IMR-90 (cell line): ENCODE measurements at regions of chr11 and their contacts with region 1.

Region 1: GRCh38 chr11:94183886-94184264 is 55.2 kb downstream of the PANX1 start:
- DNase-seq: peak; percentile 67
- ATAC-seq: peak; percentile 22; the same call in 1 of the 2 replicates
- H3K4me3 ChIP-seq: no peak overlapping the region
- H3K27ac ChIP-seq: no peak overlapping the region
- H3K4me1 ChIP-seq: peaks cover 26% of the 10 kb centered on the region
- H3K27me3 ChIP-seq: no peaks in the 10 kb centered on the region
- CTCF ChIP-seq: peak; percentile 67
- POLR2A ChIP-seq: no peak
- RAD21 ChIP-seq: peak; percentile 71

Region 2: GRCh38 chr11:93348930-93349329 is 834.9 kb before region 1 on chr11:
- CTCF ChIA-PET with region 1: no interaction called
- POLR2A ChIA-PET with region 1: no interaction called
- dilution Hi-C with region 1: no loop called
- in situ Hi-C with region 1: no loop called
- intact Hi-C with region 1: no loop called
- DNase-seq: no peak
- ATAC-seq: no peak
- H3K4me3 ChIP-seq: no peak overlapping the region
- H3K27ac ChIP-seq: no peak overlapping the region
- H3K4me1 ChIP-seq: no peaks in the 10 kb centered on the region
- H3K27me3 ChIP-seq: no peaks in the 10 kb centered on the region
- CTCF ChIP-seq: no peak
- POLR2A ChIP-seq: no peak
- RAD21 ChIP-seq: no peak

Region 3: DNA sequence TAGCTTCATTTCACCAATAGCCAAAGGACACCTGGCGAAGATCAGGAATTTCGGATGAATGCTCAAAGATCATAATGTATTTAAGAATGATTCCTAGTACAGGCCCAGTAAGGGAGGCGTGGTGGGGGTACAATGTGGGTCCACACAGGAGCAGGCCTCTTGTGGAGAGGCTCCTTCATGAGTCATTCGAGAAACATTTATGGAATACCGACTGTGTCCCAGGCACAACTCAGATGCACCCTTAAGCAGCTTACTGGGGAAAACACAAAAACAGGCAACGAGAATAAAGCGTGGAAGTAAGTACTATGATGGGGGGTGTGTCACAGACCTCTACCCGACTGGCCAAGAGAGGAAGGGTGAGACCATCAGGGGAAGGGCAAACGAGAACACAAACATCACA is 685.2 kb before region 1 on chr11:
- CTCF ChIA-PET with region 1: no interaction called
- POLR2A ChIA-PET with region 1: no interaction called
- dilution Hi-C with region 1: no loop called
- in situ Hi-C with region 1: no loop called
- intact Hi-C with region 1: no loop called
- DNase-seq: peak; percentile 51
- ATAC-seq: peak; percentile 67
- H3K4me3 ChIP-seq: no peak overlapping the region
- H3K27ac ChIP-seq: no peak overlapping the region
- H3K4me1 ChIP-seq: peaks cover 4% of the 10 kb centered on the region; the same call in 1 of the 2 replicates
- H3K27me3 ChIP-seq: no peaks in the 10 kb centered on the region
- CTCF ChIP-seq: no peak
- POLR2A ChIP-seq: no peak
- RAD21 ChIP-seq: no peak

Region 4: GRCh38 chr11:93908689-93909088 is 275.2 kb before region 1 on chr11:
- CTCF ChIA-PET with region 1: no interaction called
- POLR2A ChIA-PET with region 1: no interaction called
- dilution Hi-C with region 1: no loop called
- in situ Hi-C with region 1: no loop called
- intact Hi-C with region 1: loop called (anchors 5 kb)
- DNase-seq: peak; percentile 91
- ATAC-seq: peak; percentile 97
- H3K4me3 ChIP-seq: no peak overlapping the region
- H3K27ac ChIP-seq: peak overlapping the region; percentile 80
- H3K4me1 ChIP-seq: peaks cover 9% of the 10 kb centered on the region
- H3K27me3 ChIP-seq: no peaks in the 10 kb centered on the region
- CTCF ChIP-seq: no peak
- POLR2A ChIP-seq: no peak
- RAD21 ChIP-seq: no peak

Region 5: GRCh38 chr11:94199136-94200130 is 15.6 kb after region 1 on chr11:
- CTCF ChIA-PET with region 1: no interaction called
- POLR2A ChIA-PET with region 1: no interaction called
- dilution Hi-C with region 1: no loop called
- in situ Hi-C with region 1: no loop called
- intact Hi-C with region 1: loop called (anchors 1 kb)
- DNase-seq: peak; percentile 29
- ATAC-seq: no peak
- H3K4me3 ChIP-seq: no peak overlapping the region
- H3K27ac ChIP-seq: peak overlapping the region; percentile 72
- H3K4me1 ChIP-seq: peaks cover 17% of the 10 kb centered on the region
- H3K27me3 ChIP-seq: no peaks in the 10 kb centered on the region
- CTCF ChIP-seq: no peak
- POLR2A ChIP-seq: no peak
- RAD21 ChIP-seq: no peak

Region 6: GRCh38 chr11:94417386-94417987 is 233.6 kb after region 1 on chr11:
- CTCF ChIA-PET with region 1: interaction called, 13 read pairs
- POLR2A ChIA-PET with region 1: no interaction called
- dilution Hi-C with region 1: no loop called
- in situ Hi-C with region 1: loop called (anchors 10 kb)
- intact Hi-C with region 1: loop called (anchors 1 kb)
- DNase-seq: peak; percentile 59
- ATAC-seq: peak; percentile 73
- H3K4me3 ChIP-seq: no peak overlapping the region
- H3K27ac ChIP-seq: no peak overlapping the region
- H3K4me1 ChIP-seq: no peaks in the 10 kb centered on the region
- H3K27me3 ChIP-seq: no peaks in the 10 kb centered on the region
- CTCF ChIP-seq: peak; percentile 70
- POLR2A ChIP-seq: no peak
- RAD21 ChIP-seq: peak; percentile 70